WTC11 (cell line): ENCODE measurements at regions of chr19 and their contacts with region 1.

Region 1: GRCh38 chr19:53076977-53077376 is 26.2 kb downstream of the ZNF160 start:
- DNase-seq: peak; percentile 91
- ATAC-seq: peak; percentile 99
- H3K4me3 Mint-ChIP-seq: no peak overlapping the region
- H3K27ac Mint-ChIP-seq: peak overlapping the region; percentile 95
- H3K4me1 Mint-ChIP-seq: peaks cover 10% of the 10 kb centered on the region
- H3K27me3 Mint-ChIP-seq: no peaks in the 10 kb centered on the region
- CTCF ChIP-seq: peak; percentile 70

Region 2: DNA sequence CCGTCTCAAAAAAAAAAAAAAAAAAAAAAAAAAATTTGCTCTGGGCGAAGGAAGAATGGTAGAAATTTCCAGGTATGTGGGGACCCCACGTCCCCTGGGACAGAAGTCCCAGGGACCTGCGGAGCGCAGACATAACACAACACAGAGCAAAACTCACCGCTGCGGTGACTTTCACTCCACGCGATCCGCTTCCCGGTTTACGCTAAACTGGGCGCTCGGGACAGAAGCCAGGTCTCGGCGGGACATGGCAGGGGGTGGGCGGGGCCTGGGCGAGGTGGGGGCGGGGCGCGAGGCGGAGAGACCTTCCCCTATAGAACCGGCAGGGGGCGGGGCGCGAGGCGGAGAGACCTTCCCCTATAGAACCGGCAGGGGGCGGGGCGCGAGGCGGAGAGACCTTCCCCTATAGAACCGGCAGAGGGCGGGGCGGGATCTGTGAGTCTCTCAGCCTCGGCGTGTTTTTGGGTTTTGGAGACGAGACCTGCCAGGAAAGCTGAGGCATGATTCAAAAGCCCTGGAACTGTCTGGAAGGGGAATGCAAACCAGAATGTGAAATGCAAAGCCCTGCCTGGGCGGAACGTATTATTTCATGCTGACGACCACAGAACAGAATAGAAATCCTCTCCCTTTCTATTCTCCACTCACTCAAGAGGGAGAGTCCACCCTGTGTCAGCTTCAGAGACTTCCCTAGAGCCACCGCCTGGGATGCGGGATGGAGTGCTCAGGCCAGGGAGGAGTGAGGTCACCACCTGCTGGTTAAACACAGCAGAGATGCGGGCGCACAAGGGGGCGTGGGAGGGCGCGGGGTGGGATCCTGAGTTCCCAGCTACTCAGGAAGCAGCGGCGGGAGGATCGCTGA is 83.4 kb before region 1 on chr19:
- CTCF ChIA-PET with region 1: interaction called, 13 read pairs
- POLR2A ChIA-PET with region 1: no interaction called
- DNase-seq: peak; percentile 90
- ATAC-seq: peak; percentile 62
- H3K4me3 Mint-ChIP-seq: peak overlapping the region; percentile 82
- H3K27ac Mint-ChIP-seq: peak overlapping the region; percentile 80; the same call in 1 of the 2 replicates
- H3K4me1 Mint-ChIP-seq: peaks cover 19% of the 10 kb centered on the region
- H3K27me3 Mint-ChIP-seq: peaks cover 96% of the 10 kb centered on the region
- CTCF ChIP-seq: peak; percentile 90

Region 3: GRCh38 chr19:53019684-53020083 is 57.3 kb before region 1 on chr19:
- CTCF ChIA-PET with region 1: interaction called, 12 read pairs
- POLR2A ChIA-PET with region 1: no interaction called
- DNase-seq: peak; percentile 89
- ATAC-seq: peak; percentile 100
- H3K4me3 Mint-ChIP-seq: no peak overlapping the region
- H3K27ac Mint-ChIP-seq: no peak overlapping the region
- H3K4me1 Mint-ChIP-seq: 0 out of 2 replicates have a peak, but pooled peaks cover 4% of the 10 kb centered on the region
- H3K27me3 Mint-ChIP-seq: peaks cover 17% of the 10 kb centered on the region
- CTCF ChIP-seq: peak; percentile 18; the same call in 1 of the 2 replicates

Region 4: GRCh38 chr19:53158119-53158656 is 81.2 kb after region 1 on chr19:
- CTCF ChIA-PET with region 1: interaction called, 23 read pairs
- POLR2A ChIA-PET with region 1: no interaction called
- DNase-seq: peak; percentile 52
- ATAC-seq: peak; percentile 37
- H3K4me3 Mint-ChIP-seq: peak overlapping the region; percentile 79
- H3K27ac Mint-ChIP-seq: no peak overlapping the region
- H3K4me1 Mint-ChIP-seq: peaks cover 11% of the 10 kb centered on the region
- H3K27me3 Mint-ChIP-seq: peaks cover 4% of the 10 kb centered on the region
- CTCF ChIP-seq: no peak

Region 5: GRCh38 chr19:53190253-53190652 is 113.3 kb after region 1 on chr19:
- CTCF ChIA-PET with region 1: interaction called, 16 read pairs
- POLR2A ChIA-PET with region 1: no interaction called
- DNase-seq: no peak
- ATAC-seq: no peak
- H3K4me3 Mint-ChIP-seq: no peak overlapping the region
- H3K27ac Mint-ChIP-seq: no peak overlapping the region
- H3K4me1 Mint-ChIP-seq: peaks cover 16% of the 10 kb centered on the region
- H3K27me3 Mint-ChIP-seq: peaks cover 12% of the 10 kb centered on the region
- CTCF ChIP-seq: no peak